HEK293T (cell line): ENCODE measurements at regions of chr17 and their contacts with region 1.

Region 1: DNA sequence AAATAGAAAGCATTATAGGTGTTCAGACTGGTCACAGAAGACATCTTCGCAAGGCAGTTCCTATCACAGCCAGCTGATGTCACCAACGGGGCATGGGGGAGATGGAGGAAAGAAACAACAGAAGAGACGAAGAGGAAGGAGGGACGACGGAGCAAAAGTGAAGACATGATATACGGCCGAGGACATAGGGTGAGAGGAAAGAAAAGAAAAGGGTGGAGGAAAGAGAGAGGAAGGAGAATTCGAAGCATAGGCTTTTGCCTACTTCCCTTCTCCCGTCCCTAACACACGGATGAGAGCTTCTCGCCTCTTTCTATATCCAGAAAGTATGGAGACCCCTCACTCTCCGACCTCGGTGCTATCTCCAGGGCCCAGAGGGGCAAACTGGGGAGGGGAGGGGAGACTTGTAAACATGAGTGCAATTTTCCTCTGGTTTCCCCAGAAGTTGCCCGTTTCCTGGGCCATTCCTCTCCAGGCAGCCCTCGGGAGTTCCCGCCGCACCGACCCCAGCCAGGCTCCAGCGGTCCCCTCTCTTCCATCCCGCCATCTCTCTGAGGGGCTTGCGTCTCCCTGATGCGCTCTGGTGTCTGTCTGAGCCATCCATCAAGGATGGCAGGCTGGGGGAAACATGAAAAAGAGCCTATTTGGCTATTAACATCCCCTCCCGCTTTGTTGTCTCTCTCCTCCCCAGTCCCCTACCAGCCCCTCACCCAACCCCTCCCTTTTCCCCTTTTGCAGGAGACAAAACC is 26.0 kb downstream of the COPZ2 start:
- DNase-seq: peak; percentile 75

Region 2: DNA sequence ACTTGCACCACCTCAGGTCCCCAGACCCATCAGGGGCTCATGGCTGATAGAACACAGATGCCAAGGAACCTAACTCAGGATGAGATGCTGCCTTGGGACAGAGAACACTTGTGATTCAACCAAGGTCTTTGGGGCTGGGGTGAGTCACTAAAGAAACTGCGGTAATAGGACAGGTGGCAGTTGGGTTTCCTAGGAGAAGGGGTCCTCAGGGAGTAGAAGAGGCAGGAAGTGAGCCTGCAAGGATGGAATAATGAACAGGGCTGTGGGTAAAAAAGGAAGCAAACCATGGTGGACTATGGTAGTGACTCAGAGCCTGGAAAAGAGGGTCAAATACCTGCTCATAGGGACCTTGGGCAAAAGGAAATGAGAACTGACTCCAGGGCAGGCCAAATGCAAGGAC is 76.7 kb before region 1 on chr17:
- CTCF ChIA-PET with region 1: no interaction called
- POLR2A ChIA-PET with region 1: no interaction called
- DNase-seq: no peak

Region 3: DNA sequence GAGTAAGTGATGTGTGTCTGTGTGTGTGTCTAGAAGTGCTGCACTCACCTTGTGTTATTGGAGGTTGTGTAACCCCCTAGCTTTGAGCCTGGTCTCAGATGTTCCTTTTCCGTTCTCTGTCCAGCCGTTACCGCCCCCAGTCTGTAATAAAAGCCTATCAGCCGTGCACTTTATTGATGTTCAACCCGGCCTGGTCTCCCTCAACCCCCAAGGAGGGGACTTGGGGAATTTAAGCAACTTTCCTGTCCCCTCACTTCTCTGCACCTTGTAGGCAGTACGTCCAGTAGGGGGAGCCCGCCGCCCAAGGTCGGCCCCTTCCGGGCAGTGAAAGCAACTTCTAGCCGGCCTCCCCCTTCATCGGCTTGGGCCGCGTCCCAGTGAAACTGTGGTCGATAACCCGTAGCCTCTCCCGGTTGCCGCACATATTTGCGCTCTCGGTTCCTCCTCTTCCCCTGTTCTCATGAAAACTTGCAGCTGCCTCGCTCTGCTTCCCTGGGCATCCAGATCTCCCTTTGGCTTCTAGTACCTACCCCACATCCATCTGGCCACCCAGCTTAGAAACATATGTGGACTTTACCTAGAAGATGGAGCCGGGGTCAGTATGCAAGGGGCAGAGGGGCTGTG is 62.3 kb before region 1 on chr17:
- CTCF ChIA-PET with region 1: interaction called, 25 read pairs
- POLR2A ChIA-PET with region 1: interaction called, 3 read pairs
- DNase-seq: peak; percentile 81

Region 4: DNA sequence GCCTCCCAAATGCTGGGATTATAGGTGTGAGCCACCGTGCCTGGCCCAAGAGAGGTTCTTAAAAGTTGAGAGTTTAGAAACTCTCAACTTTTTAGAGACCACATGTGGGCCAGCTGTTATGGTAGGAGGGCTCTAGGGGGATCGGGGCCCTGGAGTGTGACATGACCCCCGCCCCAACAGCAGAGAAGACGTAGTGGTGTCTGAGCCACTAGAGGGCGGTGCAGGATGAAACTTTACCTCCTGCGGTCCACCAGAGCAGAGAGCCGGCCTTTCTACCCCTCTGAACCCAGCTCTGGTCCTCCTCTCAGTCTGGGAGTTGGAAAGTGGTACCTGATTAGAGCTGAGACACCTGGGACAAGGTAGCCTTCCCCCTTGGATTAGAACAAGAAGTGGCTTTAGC is 33.3 kb before region 1 on chr17:
- CTCF ChIA-PET with region 1: interaction called, 35 read pairs
- POLR2A ChIA-PET with region 1: interaction called, 4 read pairs
- DNase-seq: peak; percentile 83